ENCODE measurements at regions of chr11 and their contacts with region 1.

Region 1: DNA sequence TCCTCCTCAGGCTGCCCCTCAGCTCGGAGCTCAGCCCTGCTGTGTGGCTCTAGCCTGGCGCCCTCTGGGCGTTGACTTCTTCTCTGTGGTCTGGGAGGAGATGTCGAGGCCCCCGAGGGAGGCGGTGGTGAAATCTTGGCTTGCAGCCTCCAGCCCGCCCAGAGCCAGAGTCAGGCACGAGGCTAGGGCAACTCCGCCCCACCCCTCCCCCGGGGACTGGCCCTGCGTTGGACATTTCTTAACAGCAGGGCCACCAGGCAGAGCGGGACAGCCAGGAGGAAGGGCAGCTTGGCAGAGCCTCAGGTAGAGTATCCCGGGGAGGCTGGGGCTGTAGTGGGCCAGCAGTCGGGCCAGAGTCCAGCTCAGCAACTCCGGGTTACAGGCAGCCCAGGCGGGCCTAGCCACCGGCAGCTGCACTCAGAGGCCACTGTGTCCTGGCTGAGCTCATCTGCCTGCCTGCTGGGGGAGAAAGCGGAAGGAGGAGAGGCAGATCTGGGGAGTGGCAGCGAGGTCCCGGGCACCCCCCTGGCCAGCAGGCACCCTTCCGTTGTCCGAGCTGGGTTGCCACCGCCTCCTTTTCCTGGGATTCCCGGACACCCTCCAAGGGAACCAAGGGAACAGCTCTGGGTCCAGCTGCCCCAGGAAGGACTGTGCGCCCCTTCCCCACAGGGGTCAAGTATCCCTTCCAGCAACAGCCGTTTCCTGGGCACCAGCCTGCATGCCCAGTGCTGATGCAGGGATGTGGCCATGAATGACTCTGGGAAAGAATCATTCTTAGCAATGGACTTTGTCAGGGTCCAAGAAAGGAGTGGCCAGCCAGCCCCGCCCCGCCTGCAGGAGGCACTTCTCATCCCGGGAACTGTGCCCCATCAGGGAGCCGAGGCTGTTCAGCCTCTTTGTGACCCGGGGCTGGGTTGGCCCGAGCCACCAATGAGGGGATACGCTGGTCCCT is at the start of gene ALDH3B1:
- DNase-seq: no peak
- H3K4me3 ChIP-seq: peak within 1 kb of the TSS; percentile 64
- CTCF ChIP-seq: peak; percentile 10

Region 2: DNA sequence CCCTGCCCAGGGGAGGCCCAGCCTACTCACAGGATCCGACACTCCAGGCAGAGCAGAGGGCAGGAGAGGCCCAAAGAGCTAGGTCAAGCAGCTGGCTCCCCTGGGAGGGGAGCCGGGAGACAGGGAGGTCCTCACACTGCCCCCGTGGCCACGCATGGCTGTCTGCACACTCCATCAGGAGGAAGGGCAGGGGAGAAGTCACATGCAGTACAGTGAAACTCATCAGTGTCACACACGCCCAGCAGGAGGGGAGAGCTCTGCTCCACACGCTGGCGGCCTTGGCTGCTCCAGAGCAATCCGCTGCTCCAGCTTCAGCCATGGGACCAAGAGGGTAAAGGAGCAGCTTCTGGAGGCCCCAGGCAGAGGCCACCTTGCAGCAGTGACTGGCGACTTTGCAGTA is 42.8 kb after region 1 on chr11:
- CTCF ChIA-PET with region 1: no interaction called
- POLR2A ChIA-PET with region 1: no interaction called
- DNase-seq: no peak
- H3K4me3 ChIP-seq: no peak overlapping the region
- CTCF ChIP-seq: no peak

Region 3: GRCh38 chr11:68066742-68067141 is 56.4 kb after region 1 on chr11:
- CTCF ChIA-PET with region 1: no interaction called
- POLR2A ChIA-PET with region 1: no interaction called
- DNase-seq: peak; percentile 28
- H3K4me3 ChIP-seq: no peak overlapping the region
- CTCF ChIP-seq: no peak

Region 4: DNA sequence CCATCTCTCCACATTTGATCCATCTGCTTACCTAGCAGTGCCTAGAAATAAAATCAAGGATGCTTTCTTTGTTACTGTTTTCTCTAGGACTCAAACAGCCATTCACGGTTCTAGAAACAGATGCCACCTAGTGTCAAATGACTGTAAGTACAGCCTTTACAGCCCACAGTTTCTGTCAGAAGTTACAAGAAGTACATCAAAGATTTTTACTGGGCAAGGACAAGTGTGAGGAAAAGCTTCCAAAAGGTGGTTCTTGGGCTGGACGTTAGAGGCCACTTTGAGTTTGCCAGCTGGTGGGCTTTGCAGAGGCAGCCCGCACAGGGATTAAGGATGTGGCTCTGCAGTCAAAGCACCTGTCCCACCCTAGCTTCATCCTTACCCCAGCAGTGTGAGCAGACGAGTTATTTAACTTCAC is 195.8 kb after region 1 on chr11:
- CTCF ChIA-PET with region 1: interaction called, 42 read pairs
- POLR2A ChIA-PET with region 1: no interaction called
- DNase-seq: no peak
- H3K4me3 ChIP-seq: no peak overlapping the region
- CTCF ChIP-seq: peak; percentile 77